ENCODE measurements at regions of chr1 and their contacts with region 1.

Region 1: DNA sequence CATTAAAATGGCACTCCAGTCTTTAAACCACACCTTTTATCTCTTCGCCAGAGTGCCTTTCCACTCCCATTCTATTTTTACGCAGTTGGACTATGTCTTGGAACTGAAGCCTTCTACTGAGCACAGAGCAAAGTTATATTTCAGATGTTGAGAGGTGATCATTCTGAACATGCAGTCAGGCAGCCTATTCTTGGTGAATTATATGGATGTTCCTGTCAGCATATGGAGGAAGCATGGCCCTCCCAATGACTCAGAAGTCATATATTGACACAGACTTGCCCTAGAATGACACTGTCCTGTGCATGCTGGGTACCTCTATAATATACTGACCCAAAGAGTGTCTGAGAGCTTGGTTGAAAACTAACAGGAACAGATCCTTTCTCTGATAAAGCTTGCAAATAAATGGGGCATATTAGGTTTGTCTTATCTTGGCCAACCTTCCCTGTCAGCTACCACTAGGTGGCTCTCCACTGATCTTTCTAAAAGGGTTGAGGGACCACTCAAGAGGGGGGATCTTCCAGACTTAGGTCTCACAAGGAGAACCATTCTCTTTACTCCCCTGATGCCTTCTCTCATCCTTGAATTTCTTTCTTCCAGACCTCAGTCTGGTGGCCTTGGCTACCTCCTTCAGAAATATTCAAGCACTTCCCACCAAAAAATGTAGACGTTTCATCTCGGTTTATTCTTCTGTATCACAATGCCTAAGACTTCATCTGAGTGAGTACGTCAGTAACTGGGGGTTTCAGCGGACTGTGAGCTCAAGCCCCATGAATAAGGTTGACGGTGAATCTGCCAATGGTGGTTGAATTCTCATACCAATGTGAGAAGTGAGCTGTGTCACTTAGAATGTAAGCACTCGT is 11.8 kb upstream of the ALG14 start:
- DNase-seq: no peak
- H3K4me3 Mint-ChIP-seq: no peak overlapping the region
- H3K27ac Mint-ChIP-seq: no peak overlapping the region
- H3K4me1 Mint-ChIP-seq: peaks cover 1% of the 10 kb centered on the region
- H3K27me3 Mint-ChIP-seq: peaks cover 20% of the 10 kb centered on the region

Region 2: GRCh38 chr1:94572780-94573179 is 511.8 kb before region 1 on chr1:
- intact Hi-C with region 1: no loop called
- DNase-seq: no peak
- H3K4me3 Mint-ChIP-seq: no peak overlapping the region
- H3K27ac Mint-ChIP-seq: no peak overlapping the region
- H3K4me1 Mint-ChIP-seq: no peaks in the 10 kb centered on the region
- H3K27me3 Mint-ChIP-seq: peaks cover 5% of the 10 kb centered on the region

Region 3: DNA sequence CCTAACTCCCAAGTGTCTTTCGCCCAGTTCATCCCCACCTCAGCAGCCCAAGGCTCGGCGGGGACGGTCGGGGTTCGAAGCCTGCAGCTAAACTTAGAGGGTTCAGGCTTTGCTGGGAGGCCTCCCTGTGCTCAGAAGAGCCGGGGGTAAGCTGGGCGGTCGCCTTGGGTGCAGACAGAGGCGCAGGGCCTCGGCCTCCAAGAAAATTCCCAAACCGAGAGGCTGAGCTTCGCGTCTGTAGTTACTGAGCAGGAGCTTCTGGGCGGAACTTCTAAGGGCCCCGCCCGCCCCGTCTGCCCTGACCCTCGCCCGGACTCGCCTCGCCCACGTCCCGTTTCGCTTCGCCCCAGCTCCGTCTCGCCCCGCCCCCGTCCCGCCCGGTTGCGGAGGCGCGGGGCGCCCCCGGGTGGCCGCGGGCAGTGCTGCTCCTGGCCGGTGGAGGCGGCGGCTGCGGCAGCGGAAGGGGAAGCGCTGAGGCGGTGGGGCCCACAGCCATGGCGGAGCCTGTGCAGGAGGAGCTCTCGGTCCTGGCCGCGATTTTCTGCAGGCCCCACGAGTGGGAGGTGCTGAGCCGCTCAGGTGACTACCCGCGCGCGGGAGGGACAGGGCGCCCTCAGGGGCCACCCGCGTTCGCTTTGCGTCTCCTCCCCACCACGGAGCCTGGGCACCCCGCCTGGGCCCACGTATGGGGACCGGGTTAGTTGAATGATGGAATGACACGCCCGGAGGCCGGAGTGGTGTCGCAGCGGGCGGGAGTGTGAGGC is 149.4 kb after region 1 on chr1 and contains the start of gene RWDD3:
- intact Hi-C with region 1: loop called (anchors 1 kb)
- DNase-seq: peak; percentile 91
- H3K4me3 Mint-ChIP-seq: peak within 1 kb of the TSS; percentile 95
- H3K27ac Mint-ChIP-seq: peak within 1 kb of the TSS; percentile 89
- H3K4me1 Mint-ChIP-seq: peaks cover 30% of the 10 kb centered on the region
- H3K27me3 Mint-ChIP-seq: peaks cover 27% of the 10 kb centered on the region
- total RNA-seq, gene RWDD3: 11.7 and 15.5 TPM in 2 replicates

Measured in activated T-helper 2 cell treated with anti-CD3 and anti-CD28 coated beads, Interferon-gamma antibody, Interleukin-2, Interleukin-4, amounts not matched to agents 10 μg/mL and 5 μg/mL and 100 μg/mL, durations not matched to agents 14 hours and 24 hours and 36 hours (primary cell).